ENCODE measurements at regions of chr11 and their contacts with region 1.

Region 1: GRCh38 chr11:82867495-82868082 is 32.6 kb downstream of the PRCP start:
- DNase-seq: peak; percentile 63
- CTCF ChIP-seq: peak; percentile 48

Region 2: GRCh38 chr11:82763167-82763566 is 104.4 kb before region 1 on chr11:
- CTCF ChIA-PET with region 1: no interaction called
- POLR2A ChIA-PET with region 1: no interaction called
- DNase-seq: no peak
- CTCF ChIP-seq: no peak

Region 3: GRCh38 chr11:82883853-82884252 is 16.3 kb after region 1 on chr11:
- CTCF ChIA-PET with region 1: interaction called, 19 read pairs
- POLR2A ChIA-PET with region 1: no interaction called
- DNase-seq: no peak
- CTCF ChIP-seq: no peak

Region 4: DNA sequence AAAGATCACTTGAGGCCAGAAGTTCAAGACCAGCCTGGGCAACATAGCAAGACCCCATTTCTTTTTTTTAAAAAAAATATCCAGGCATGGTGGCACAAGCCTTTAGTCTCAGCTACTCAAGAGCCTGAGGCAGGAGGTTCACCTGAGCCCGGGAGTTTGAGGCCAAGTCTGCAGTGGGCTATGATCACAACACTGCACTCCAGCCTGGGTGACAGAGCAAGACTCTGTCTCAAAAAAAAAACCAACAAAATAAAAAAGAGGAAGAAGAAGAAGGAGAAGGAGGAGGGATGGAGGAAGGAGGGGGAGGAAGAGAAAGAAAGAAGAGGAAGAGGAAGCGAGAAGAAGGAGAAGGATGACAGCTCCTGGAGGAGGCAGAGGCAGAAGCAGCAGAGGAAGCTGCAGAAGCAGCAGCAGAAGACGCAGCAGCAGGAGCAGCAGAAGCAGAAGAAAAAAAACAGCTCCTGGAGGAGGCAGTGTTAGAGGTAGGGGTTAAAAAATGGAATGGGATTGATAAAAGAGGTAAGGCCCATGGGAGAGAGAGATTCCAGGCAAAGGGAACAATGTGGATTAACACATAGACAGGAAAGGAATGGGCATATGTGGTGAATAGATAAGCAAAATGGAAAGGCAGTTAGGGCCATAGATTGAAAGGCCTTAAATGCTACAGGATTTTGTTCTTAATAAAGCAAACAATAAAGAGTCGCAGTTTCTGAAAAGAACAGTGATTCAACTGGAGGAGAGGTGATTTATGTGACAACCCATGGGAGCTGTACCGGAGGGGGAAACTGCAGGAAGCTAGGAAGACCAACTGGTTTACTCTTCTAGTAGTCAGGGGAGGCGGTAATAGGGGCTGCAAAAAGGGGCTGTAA is 21.8 kb after region 1 on chr11:
- CTCF ChIA-PET with region 1: interaction called, 19 read pairs
- POLR2A ChIA-PET with region 1: no interaction called
- DNase-seq: no peak
- CTCF ChIP-seq: no peak

Region 5: DNA sequence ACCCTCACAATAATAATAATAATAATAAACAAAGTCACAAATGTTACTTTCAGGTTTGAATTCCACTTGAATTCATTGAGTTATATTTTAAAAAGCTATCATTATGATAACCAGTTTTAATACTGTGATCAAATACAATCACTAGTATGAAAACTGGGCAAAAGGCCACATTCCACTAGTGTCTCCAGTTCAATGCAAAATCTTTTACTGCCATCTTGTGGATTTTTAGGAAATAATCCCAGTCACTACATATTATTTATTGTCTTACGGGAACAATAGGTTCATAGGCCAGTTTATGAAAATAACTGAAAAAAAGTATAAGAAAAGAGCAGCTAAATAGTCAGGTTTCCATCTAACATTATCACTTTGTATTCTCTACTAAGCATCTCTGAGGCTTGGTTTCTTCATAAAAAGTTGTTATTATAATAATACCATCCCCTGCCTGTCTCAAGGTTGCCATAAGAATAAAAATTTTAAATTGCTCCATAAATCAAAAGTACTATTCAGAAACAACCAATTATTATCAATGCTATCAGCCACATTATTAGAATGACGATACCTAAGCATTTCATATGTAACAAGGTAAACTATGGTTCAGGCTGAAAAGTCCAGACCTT is 952.5 kb after region 1 on chr11:
- CTCF ChIA-PET with region 1: interaction called, 57 read pairs
- POLR2A ChIA-PET with region 1: no interaction called
- DNase-seq: peak; percentile 11
- CTCF ChIP-seq: peak; percentile 30